ENCODE measurements at regions of chr3 and their contacts with region 1.

Region 1: GRCh38 chr3:31531992-31532586 is 636 bp upstream of the STT3B start:
- DNase-seq: peak; percentile 99
- H3K4me3 ChIP-seq: peak overlapping the region; percentile 94
- H3K27ac ChIP-seq: peak overlapping the region; percentile 92
- H3K4me1 ChIP-seq: peaks cover 18% of the 10 kb centered on the region
- CTCF ChIP-seq: no peak; the same call in 1 of the 2 replicates

Region 2: DNA sequence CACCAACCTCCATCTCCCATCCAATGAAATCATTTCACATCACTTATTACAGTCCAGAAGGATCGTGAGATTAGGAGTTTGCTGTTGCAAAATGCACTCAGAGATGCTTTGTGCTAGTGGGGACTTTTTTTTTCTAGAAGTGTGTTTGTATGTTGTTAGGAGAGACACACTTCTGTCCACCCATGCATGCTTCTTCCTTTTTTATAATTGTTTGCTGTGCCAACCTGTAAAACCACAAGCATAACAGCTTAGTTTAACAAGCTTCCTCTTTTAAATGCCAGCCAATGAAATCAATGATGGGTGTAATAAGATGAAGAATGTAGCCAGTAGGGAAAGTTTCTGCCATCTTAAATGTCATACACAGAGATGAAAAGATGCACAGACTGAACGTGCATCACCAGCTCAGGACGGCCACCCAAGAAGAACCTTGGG is 304.9 kb before region 1 on chr3:
- CTCF ChIA-PET with region 1: no interaction called
- POLR2A ChIA-PET with region 1: interaction called, 54 read pairs
- intact Hi-C with region 1: loop called (anchors 1 kb)
- DNase-seq: peak; percentile 96
- H3K4me3 ChIP-seq: peak overlapping the region; percentile 57
- H3K27ac ChIP-seq: peak overlapping the region; percentile 100
- H3K4me1 ChIP-seq: peaks cover 98% of the 10 kb centered on the region
- CTCF ChIP-seq: no peak

Region 3: DNA sequence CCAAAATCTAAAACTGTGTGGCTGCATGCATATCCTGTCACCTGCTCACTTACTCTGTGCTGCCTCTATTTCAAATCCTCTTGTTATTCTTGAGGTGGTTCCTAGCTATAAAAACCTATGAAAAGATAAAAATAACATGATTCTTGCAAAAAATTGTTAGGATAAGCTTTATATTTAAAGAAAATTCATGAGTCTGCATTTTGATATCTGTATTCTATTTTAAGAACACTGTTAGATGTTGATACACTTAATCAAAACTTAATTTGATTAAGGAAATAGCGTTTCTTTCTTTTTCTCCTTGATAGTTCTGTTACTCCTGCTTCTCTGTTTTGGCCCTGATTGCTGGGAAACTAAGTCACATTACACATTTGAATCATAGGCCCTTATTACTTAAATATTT is 23.1 kb after region 1 on chr3:
- CTCF ChIA-PET with region 1: no interaction called
- POLR2A ChIA-PET with region 1: interaction called, 12 read pairs
- intact Hi-C with region 1: no loop called
- DNase-seq: no peak
- H3K4me3 ChIP-seq: no peak overlapping the region
- H3K27ac ChIP-seq: no peak overlapping the region
- H3K4me1 ChIP-seq: peaks cover 13% of the 10 kb centered on the region
- CTCF ChIP-seq: no peak

Region 4: GRCh38 chr3:31952205-31952604 is 420.1 kb after region 1 on chr3:
- CTCF ChIA-PET with region 1: no interaction called
- POLR2A ChIA-PET with region 1: no interaction called
- intact Hi-C with region 1: loop called (anchors 5 kb)
- DNase-seq: peak; percentile 99
- H3K4me3 ChIP-seq: peak overlapping the region; percentile 57
- H3K27ac ChIP-seq: peak overlapping the region; percentile 100
- H3K4me1 ChIP-seq: peaks cover 87% of the 10 kb centered on the region
- CTCF ChIP-seq: no peak

Region 5: DNA sequence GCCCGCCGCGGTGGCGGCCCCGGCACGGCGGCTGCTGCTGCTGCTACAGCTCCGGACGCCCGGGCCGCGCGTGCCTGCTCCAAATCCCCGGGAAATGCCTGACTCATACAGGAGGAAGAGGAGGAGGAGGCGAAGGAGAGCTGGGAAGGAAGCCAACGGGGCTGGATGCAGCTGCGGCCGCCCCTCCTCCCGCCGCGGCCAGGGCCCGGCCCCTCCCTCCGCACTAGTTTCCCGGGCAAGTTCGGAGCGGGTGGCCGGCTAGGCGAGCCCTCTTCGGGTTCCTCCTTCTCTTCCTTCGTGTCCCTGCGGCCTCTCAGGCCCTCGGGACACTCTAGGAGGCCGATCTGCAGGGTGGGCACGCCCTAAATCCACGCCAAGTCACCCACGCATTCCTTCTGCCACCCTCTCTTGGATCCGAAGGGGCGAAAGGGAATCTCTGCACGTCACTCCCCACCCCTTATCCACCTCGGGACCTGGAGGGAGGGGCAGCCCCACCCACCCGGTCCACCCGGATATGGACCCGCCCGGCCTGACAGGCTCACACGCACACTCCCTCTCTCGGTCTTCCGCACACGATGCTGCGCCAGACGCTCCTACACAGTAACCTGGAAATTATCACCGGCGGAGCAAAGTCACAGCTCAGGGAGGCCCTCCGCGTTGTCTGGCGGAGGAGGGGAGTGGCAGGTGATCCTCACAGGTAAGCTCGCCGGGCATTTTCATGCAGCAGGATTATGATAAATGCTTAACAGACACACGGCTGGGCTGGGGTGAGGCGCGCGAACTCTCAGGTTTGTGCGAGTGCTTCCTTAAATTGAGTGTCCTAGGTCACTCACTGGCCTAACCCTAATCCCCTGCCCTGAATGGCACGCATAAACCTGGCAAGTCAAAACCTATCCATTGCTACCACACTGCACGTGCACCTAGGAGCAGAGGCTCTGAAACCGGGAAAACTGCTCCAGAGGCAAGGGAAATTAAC is 449.4 kb after region 1 on chr3 and contains the starts of genes OSBPL10 and ZNF860:
- CTCF ChIA-PET with region 1: no interaction called
- POLR2A ChIA-PET with region 1: interaction called, 15 read pairs
- intact Hi-C with region 1: loop called (anchors 5 kb)
- DNase-seq: peak; percentile 81
- H3K4me3 ChIP-seq: peak within 1 kb of the TSS; percentile 91
- H3K27ac ChIP-seq: peak within 1 kb of the TSS; percentile 88
- H3K4me1 ChIP-seq: peaks cover 72% of the 10 kb centered on the region
- CTCF ChIP-seq: peak; percentile 11; the same call in 1 of the 2 replicates
- total RNA-seq, gene OSBPL10: 58.4 and 65.7 TPM in 2 replicates
- total RNA-seq, gene ZNF860: 13.8 and 20.3 TPM in 2 replicates

Region 6: DNA sequence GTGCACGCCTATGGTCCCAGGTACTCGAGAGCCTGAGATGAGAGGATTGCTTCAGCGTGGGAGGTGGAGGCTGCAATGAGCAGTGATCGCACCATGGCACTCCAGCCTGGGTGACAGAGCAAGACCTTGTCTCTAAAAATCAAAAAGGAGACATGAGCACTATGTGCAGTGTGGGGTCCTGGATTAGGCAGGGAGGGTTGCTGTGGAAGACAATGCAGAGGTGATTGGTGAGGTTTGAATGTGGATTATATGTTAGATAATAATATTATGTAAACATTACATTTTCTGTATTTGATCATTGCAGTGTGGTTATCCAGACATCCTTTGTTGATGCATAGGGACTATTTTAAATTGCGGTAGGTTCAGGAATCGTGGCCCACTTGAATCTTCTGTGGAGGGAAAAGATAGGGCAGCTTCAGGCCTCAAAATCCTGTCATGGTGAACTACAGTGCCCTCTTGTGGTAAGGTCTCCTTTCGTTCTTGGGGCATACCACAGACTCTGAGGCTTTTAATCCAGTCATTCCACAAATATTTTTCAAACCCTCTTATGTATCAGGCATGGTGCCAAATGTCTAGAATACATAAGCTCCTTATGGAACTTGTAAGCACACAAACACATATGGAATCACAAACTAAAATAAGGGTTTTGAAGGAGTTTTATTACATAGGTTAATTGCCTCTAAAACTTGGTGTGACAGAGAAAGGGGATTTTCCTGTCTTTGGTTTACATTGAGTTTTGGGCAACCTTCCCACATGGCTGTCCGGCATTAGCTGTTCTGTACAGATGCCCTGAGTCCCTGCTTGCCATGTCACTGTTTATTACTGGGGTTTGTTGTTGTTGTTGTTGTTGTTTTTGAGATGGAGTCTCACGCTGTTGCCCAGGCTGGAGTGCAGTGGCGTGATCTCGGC is 612.0 kb after region 1 on chr3:
- CTCF ChIA-PET with region 1: no interaction called
- POLR2A ChIA-PET with region 1: interaction called, 3 read pairs
- intact Hi-C with region 1: loop called (anchors 10 kb)
- DNase-seq: peak; percentile 84
- H3K4me3 ChIP-seq: no peak overlapping the region
- H3K27ac ChIP-seq: no peak overlapping the region
- H3K4me1 ChIP-seq: peaks cover 36% of the 10 kb centered on the region
- CTCF ChIP-seq: peak; percentile 95